Right ventricle myocardium inferior (tissue), 1 donor: ENCODE measurements at regions of chr12 and their contacts with region 1.

Region 1: GRCh38 chr12:133058203-133059125 is 21.2 kb downstream of the ZNF84 start:
- DNase-seq: no peak
- ATAC-seq: no peak

Region 2: GRCh38 chr12:133080368-133081158 is 22.1 kb after region 1 on chr12 and contains the start of gene ZNF140:
- intact Hi-C with region 1: no loop called
- DNase-seq: peak; percentile 98
- ATAC-seq: peak; percentile 87
- total RNA-seq, gene ZNF140: 6.3 TPM

Region 3: DNA sequence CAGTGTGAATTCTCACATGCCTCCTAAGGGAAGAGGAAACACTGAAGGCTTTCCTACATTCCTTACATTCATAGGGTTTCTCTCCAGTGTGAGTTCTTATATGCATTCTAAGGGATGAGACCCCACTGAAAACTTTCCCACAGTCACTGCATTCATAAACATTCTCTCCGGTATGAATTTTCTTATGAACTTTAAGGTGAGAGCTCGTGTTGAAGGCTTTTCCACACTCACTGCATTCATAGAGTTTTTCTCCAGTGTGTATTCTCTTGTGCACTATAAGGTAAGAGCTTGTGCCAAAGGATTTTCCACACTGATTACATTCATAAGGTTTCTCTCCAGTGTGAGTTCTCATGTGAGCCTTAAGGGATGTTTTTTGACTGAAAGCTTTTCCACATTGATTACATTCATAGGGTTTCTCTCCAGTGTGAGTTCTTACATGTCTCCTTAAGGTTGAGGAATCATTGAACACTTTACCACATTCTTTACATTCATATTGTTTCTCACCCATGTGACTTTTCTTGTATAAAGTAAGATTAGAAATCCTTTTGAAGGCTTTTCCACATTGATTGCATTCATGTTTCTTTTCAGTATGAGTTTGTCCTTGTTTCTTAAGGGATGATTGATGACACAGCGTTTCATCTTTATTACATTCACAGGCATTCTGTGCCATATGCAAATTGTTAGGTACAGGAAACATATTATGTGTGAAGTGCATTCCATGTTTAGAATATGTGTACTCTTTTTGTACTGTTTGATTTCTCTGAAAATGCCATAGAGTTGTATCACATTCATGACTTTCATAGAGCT is 62.1 kb after region 1 on chr12:
- intact Hi-C with region 1: loop called (anchors 5 kb)
- DNase-seq: no peak
- ATAC-seq: no peak